ENCODE measurements at regions of chr20 and their contacts with region 1.

Region 1: DNA sequence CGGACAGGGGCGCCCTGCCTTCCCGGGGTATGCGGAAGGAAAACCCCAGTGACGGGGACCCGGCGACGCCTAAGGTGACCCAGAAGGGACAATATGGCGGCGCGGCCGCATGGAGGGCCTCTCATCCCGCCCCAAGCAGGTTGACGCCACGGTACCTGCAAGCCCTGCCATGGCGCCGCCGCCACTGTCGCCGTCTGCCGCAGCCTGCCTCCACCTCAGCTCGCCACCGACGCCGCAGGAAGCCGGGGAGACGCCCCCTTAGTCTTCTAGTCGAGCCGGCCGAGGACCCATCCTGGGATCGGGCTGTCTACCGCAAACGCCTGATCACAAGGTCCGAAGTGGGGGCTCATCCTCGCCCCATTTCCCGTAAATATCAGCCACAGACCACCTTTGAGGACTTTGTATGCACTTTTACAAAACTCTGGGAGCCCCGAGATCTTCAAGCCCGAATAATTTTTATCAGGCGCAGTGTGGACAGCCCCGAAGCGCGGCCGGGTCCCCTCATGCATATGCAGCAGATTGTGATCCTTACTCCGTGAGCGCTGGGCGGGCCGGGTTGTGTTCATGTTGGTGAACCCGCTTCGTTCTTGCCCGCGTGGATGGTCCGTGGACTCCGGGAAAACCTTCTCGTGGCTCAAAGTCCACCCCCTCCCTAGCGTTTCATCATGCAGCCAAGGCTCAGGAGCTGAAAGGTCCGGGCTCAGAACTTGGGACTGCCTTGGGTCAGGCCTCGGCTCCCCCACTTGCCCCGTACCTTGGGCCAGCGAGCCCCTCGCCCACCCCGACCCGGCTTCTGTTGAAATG is at the start of gene BLCAP:
- DNase-seq: peak; percentile 89 to 96 (median 93)
- ATAC-seq: peak; percentile 95
- H3K4me3 ChIP-seq: peak within 1 kb of the TSS; percentile 96 to 99
- H3K27ac ChIP-seq: peak within 1 kb of the TSS; percentile 95 to 97
- H3K4me1 ChIP-seq: peaks cover 23 to 51% of the 10 kb centered on the region in 2 donors
- H3K27me3 ChIP-seq: no peaks in the 10 kb centered on the region
- CTCF ChIP-seq: no peak
- polyA plus RNA-seq, gene BLCAP: 65.6 to 75.4 (median 68.0) TPM

Region 2: DNA sequence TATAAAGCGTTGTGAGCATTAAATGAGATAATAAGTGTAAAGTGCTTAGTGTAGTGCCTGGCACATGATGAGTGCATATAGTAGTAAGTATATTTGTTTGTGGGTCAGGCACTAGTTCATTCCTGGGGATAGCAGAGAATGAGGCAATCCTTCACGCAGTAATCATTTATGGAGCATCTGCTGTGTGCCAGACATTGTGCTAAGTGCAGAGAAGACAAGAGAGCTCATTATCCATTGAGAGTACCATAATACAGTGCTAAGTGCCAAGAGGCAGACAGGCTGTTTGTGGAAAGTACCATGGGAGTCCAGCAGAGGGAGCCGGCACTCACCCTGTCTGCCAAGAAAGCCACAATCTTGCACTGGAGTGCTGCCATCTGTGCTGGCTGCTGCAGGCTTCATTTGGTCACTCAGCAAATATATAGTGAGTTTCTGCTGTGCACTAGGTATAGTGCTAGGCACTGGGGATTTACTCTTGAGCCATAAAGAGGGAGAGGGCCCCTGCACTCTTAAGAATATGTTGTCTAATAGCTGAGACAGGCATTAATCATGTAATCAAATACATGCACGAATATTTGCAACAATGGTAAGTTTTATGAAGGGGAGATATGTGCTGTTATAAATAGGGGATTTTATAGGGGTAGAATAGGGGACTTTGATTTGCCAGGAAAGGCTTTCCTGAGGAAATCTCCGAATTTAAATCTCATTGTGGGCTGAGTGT is 335.5 kb before region 1 on chr20:
- intact Hi-C with region 1: loop called (anchors 5 to 10 kb)
- DNase-seq: peak; percentile 84 to 92 (median 87)
- ATAC-seq: peak; percentile 97
- H3K4me3 ChIP-seq: no peak overlapping the region
- H3K27ac ChIP-seq: no peak overlapping the region
- H3K4me1 ChIP-seq: peaks cover 0 to 61% of the 10 kb centered on the region in 2 donors
- H3K27me3 ChIP-seq: no peaks in the 10 kb centered on the region
- CTCF ChIP-seq: peak; percentile 84 to 90

Region 3: GRCh38 chr20:37384683-37385174 is 143.1 kb before region 1 on chr20:
- intact Hi-C with region 1: loop called in 1 of 2 experiments (anchors 10 kb)
- DNase-seq: peak; percentile 60 to 95 (median 68)
- ATAC-seq: peak; percentile 84
- H3K4me3 ChIP-seq: peak overlapping the region; percentile 29 to 40
- H3K27ac ChIP-seq: no peak overlapping the region
- H3K4me1 ChIP-seq: peaks cover 2 to 40% of the 10 kb centered on the region in 2 donors
- H3K27me3 ChIP-seq: peaks cover 0 to 7% of the 10 kb centered on the region in 2 donors
- CTCF ChIP-seq: peak; percentile 94 to 95